ENCODE measurements at regions of chr2 and their contacts with region 1.

Region 1: GRCh38 chr2:127597984-127598380 is 48.0 kb upstream of the GPR17 start:
- DNase-seq: no peak
- ATAC-seq: no peak
- H3K4me3 ChIP-seq: no peak overlapping the region
- H3K27ac ChIP-seq: no peak overlapping the region
- H3K4me1 ChIP-seq: no peaks in the 10 kb centered on the region
- H3K27me3 ChIP-seq: no peaks in the 10 kb centered on the region; a peak in 1 of 4 replicates
- CTCF ChIP-seq: no peak
- EP300 ChIP-seq: no peak
- POLR2A ChIP-seq: no peak
- RAD21 ChIP-seq: no peak

Region 2: GRCh38 chr2:127637725-127638252 is 39.8 kb after region 1 on chr2:
- CTCF ChIA-PET with region 1: no interaction called
- POLR2A ChIA-PET with region 1: no interaction called
- RAD21 ChIA-PET with region 1: no interaction called
- SMC1A ChIA-PET with region 1: no interaction called
- in situ Hi-C with region 1: no loop called
- intact Hi-C with region 1: loop called (anchors 5 kb)
- DNase-seq: no peak
- ATAC-seq: no peak
- H3K4me3 ChIP-seq: no peak overlapping the region
- H3K27ac ChIP-seq: no peak overlapping the region
- H3K4me1 ChIP-seq: peaks cover 13% of the 10 kb centered on the region
- H3K27me3 ChIP-seq: no peaks in the 10 kb centered on the region
- CTCF ChIP-seq: no peak
- EP300 ChIP-seq: no peak
- POLR2A ChIP-seq: no peak
- RAD21 ChIP-seq: no peak

Measured in GM12878 (cell line).